Right cardiac atrium (tissue), 5 donors: ENCODE measurements at regions of chr2 and their contacts with region 1.

Region 1: DNA sequence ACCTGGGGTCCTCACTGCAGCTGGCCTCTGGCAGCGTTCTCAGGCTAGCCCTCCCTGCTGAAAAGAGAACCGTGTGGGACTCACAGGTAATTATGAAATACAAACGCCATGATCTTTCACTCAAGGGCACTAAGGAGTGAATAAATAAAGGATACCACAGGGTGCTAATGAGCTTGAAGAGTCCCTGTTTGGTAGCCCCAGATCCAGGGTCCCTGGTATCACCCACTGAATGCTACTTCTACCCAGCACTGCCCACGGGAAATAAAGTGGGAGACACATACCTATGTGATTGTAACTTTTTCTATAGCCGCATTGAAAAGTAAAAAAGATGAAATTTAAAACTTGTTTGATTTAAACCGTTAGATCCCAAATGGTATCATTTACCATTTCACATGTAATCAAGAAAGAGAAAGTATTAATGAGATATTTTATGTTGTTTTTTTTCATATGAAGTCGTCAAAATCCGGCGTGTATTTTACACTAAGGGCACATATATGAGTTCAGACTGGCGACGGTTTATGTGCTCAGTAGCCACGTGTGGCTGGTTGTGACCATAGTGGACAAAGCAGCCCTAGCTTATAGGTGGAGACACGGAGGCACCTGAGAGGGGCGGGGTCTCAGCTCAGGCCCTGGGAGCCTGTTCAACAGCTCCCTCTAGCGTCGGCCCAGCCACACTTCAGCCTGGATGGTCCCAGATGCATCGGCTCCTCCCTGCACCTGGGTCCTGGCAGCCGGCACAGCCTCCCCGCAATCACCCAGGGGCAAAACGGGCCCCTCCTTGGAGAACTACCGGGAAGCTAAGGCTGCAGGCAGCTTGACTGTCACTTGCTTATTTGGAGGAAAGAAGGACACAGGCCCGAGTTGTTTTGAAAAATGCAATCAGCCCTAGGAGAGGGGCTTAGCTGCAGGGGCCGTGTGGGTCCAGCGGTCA is 39.2 kb downstream of the ODC1 start:
- DNase-seq: peak; percentile 65 to 89 (median 84)
- ATAC-seq: peak; percentile 67 to 76
- H3K4me3 ChIP-seq: no peak overlapping the region
- H3K27ac ChIP-seq: peak overlapping the region; percentile 14
- H3K4me1 ChIP-seq: peaks cover 22% of the 10 kb centered on the region
- H3K27me3 ChIP-seq: no peaks in the 10 kb centered on the region

Region 2: GRCh38 chr2:10122386-10123280 is 286.3 kb before region 1 on chr2 and contains the start of gene RRM2:
- intact Hi-C with region 1: loop called in 2 of 4 experiments (anchors 5 kb)
- DNase-seq: peak; percentile 93 to 97 (median 97)
- ATAC-seq: peak; percentile 92 to 95
- H3K4me3 ChIP-seq: peak within 1 kb of the TSS; percentile 45
- H3K27ac ChIP-seq: no peak within 1 kb of the TSS
- H3K4me1 ChIP-seq: peaks cover 3% of the 10 kb centered on the region
- H3K27me3 ChIP-seq: no peaks in the 10 kb centered on the region
- total RNA-seq, gene RRM2: 0.37 to 6.1 (median 2.7) TPM

Region 3: DNA sequence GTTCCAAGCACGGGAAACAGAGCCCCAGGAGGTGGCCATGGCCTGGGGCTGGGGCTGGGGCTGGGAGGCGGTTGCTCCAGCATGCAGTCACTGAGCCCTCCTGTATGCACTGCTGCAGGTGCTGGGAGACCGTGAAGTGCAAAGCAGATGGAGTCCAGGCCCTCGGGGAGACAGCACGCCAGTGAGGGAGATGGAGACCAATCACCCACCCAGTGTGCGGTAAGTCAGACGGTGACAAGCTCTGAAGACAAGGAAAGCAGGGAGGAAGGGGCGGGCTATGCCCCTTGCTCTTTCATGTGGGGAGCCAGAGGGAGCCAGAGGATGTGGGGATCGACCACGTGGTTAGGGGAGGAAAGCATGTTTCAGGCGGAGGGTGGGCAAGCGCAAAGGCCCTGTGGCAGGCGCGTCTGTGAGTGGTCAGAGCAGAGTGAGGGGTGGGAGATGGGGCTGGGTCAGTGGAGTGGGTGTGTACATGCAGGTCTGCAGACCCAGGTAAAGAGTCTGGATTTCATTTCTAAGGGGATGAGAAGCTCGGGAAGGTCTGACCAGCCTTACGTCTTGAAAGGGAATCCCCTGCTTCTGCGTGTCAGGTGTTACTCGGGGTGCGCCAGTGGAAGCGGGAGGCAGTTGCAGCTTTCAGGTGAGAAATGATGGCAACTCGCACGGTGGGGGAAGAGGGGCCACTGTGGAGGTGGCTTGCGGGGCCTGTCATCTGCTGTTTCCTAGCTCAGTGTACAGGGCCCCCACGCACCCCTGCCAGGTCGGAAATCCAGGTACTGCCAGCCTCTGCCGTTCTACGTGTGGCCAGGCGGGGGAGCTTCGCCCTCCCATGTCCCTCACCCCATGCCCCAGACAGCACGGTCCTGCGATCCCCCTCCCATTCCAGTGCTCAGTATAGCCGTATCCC is 266.9 kb before region 1 on chr2:
- intact Hi-C with region 1: loop called in 2 of 4 experiments (anchors 5 kb)
- DNase-seq: peak in 2 of 3 donors; percentile 63 to 68
- ATAC-seq: peak; percentile 42 to 62
- H3K4me3 ChIP-seq: no peak overlapping the region
- H3K27ac ChIP-seq: no peak overlapping the region
- H3K4me1 ChIP-seq: no peaks in the 10 kb centered on the region
- H3K27me3 ChIP-seq: no peaks in the 10 kb centered on the region

Region 4: DNA sequence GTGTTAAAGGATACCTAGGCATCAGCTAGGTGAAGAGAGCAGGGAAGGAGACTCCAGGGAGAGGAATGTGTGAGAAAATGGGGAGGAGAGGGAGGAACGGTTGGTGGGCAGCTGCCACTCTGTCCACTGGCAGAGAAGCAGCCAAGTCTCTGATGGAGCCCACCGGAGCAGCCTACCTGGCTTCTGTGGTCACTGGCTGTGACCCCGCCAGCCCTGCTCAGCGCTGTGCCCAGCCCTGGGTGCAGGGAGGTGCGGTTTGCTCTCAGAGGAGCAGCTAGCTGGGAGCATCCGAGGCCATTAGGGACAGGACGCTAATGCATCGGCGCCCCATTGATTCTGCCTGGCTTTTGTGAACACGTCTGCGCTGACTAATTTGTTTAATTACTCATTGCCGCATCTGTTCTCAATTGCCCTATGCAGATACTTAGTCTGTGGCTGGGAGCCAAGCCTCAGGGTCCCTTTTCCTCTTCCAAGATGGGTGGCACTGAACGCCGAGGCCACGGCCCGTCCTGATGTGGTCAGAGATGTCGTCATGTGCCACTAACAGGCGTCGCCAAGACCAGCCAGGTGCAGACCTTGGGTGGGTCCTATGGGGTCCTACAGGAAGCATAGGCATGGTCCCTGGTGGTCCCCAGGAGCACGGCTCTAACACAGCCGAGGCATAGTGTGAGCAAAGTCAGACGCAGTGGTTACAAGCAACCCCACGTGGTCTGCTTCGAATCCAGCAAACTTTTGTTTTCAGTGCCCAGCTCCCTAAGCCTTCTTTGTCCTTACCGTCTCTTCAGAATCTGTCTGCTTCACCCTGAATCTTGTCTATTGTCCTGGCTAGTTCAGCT is 204.4 kb before region 1 on chr2:
- intact Hi-C with region 1: no loop called
- DNase-seq: no peak
- ATAC-seq: no peak
- H3K4me3 ChIP-seq: no peak overlapping the region
- H3K27ac ChIP-seq: no peak overlapping the region
- H3K4me1 ChIP-seq: no peaks in the 10 kb centered on the region
- H3K27me3 ChIP-seq: no peaks in the 10 kb centered on the region

Region 5: GRCh38 chr2:10302479-10303180 is 106.3 kb before region 1 on chr2 and contains the start of gene HPCAL1:
- intact Hi-C with region 1: loop called in 2 of 4 experiments (anchors 5 to 10 kb)
- DNase-seq: peak; percentile 88 to 96 (median 96)
- ATAC-seq: peak; percentile 90 to 93
- H3K4me3 ChIP-seq: peak within 1 kb of the TSS; percentile 76
- H3K27ac ChIP-seq: peak within 1 kb of the TSS; percentile 54
- H3K4me1 ChIP-seq: peaks cover 3% of the 10 kb centered on the region
- H3K27me3 ChIP-seq: no peaks in the 10 kb centered on the region
- total RNA-seq, gene HPCAL1: 18.5 to 32.2 (median 24.2) TPM

Region 6: DNA sequence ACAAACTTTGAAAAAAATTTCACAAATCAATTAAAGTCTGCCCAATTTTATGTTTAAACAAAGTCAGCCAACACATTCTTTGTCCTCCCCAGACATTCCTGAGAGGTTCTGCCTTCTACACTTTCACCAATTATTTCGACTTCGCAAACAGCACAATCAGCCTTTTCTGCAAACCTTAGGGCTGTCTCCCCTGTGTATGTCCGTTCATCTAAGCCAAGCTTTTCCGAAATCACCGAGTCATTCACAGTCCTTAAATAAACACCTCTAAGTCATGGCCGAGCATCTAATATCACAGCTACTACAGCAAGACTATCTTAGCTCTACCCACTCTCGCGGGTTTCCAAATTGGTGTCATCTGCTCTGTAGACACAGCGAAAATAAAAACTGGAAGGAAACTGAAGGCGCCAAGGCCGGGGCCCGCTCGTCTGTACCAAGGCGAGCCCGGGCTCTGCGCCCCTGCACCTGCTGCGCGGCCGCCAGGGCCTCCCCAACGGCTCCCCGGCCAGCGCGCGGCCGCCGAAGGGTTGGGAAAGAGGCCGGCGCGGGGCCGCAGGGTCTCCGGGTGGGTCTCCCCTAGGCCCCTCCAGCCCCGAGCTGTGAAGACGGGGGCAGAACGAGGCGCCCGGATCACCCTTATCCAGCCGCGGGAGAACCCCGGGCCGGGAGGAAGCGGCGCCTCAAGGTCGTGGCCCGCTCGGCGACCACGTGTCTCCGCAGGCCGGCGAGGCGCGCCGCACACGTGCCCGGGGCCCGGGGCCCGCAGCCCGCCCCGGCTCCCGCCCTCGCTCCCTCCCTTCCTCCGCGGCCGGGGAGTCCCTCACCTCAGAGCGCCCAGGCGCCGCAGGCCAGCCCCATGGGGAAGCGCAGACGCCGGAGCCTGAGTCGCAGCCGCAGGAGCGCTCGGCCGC is 38.6 kb after region 1 on chr2:
- intact Hi-C with region 1: no loop called
- DNase-seq: peak in 1 of 3 donors; percentile 85
- ATAC-seq: peak; percentile 44 to 52
- H3K4me3 ChIP-seq: peak overlapping the region; percentile 80
- H3K27ac ChIP-seq: peak overlapping the region; percentile 89
- H3K4me1 ChIP-seq: peaks cover 2% of the 10 kb centered on the region
- H3K27me3 ChIP-seq: no peaks in the 10 kb centered on the region

Region 7: DNA sequence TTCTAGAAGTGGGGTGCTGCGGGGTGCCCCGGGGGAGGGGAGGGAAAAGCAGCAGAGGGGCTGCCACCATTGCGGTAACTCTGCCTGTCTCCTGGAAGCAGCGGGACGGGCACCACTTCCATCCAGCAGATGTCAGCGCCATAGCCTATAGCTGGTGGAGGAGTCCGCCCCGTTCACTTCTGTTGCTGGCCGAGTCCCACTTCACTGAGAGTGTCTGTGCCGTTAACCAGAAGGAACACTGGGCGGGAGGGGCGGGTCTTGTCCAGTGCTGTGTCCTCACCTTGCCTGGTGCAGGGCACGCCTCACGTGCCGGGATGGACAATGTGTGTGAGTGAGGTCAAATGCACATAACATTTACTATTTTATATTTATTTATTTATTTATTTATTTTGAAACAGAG is 58.5 kb after region 1 on chr2:
- intact Hi-C with region 1: no loop called
- DNase-seq: no peak
- ATAC-seq: peak in 1 of 2 donors; percentile 23
- H3K4me3 ChIP-seq: no peak overlapping the region
- H3K27ac ChIP-seq: no peak overlapping the region
- H3K4me1 ChIP-seq: no peaks in the 10 kb centered on the region
- H3K27me3 ChIP-seq: no peaks in the 10 kb centered on the region